Activated B cell treated with CpG ODN at 0.5 μM for 24 hours (primary cell): ENCODE measurements at regions of chr2 and their contacts with region 1.

Region 1: GRCh38 chr2:45833968-45834344 is 182.5 kb downstream of the PRKCE start:
- DNase-seq: peak; percentile 29
- ATAC-seq: peak; percentile 75
- H3K4me3 Mint-ChIP-seq: peak overlapping the region; percentile 39
- H3K27ac Mint-ChIP-seq: peak overlapping the region; percentile 94
- H3K4me1 Mint-ChIP-seq: peaks cover 71% of the 10 kb centered on the region
- H3K27me3 Mint-ChIP-seq: no peaks in the 10 kb centered on the region
- CTCF ChIP-seq: no peak

Region 2: DNA sequence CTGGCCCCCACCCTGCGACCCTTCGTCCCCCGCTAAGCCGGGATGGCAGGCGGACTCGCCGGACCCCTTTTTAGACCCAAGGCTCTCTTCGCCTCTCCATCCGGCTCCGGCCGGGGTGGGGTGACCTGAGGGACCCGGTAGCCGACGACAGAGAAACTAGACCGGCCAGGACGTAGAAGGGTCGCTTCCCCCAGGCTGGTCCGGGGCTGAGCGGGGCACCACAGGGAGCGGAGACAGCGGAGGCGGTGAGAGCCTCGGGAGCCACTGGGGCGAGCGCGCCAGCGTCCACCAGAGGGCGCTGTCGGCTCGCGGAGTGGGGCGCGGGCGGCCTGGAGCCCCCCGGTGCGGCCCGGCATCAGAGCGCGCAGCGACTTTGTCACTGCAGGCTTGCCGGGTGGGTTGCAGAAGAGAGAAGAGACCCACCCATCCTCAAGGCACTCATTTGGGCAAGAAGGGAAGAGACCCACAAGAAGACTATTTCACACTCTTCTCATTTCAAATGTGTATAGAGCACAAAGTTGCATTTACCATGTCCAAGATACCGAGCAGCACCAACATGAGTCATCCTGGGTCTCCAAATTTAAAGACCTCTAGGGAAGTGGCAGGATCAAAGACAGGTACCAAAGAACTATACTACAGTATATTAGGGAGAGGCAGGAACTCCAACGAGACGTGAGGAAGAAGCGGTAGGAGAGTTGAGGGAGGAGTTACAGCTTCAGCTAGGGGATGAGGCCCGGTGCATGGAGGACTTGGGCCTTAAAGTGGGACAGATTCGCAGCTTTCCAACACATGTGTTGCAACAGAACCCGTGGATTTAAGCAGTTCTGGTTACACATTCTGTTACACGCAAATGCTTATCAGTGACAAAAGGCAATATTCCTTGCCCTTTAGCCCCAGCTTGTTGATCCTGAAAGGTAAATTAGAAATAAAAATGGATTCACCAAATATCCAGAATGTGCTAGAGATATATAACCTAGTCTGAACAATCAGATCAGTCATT is 190.1 kb before region 1 on chr2:
- CTCF ChIA-PET with region 1: interaction called, 8 read pairs
- POLR2A ChIA-PET with region 1: interaction called, 3 read pairs
- intact Hi-C with region 1: loop called (anchors 1 kb)
- DNase-seq: peak; percentile 83
- ATAC-seq: peak; percentile 99
- H3K4me3 Mint-ChIP-seq: peak overlapping the region; percentile 77
- H3K27ac Mint-ChIP-seq: no peak overlapping the region
- H3K4me1 Mint-ChIP-seq: peaks cover 14% of the 10 kb centered on the region
- H3K27me3 Mint-ChIP-seq: peaks cover 5% of the 10 kb centered on the region
- CTCF ChIP-seq: peak; percentile 95

Region 3: DNA sequence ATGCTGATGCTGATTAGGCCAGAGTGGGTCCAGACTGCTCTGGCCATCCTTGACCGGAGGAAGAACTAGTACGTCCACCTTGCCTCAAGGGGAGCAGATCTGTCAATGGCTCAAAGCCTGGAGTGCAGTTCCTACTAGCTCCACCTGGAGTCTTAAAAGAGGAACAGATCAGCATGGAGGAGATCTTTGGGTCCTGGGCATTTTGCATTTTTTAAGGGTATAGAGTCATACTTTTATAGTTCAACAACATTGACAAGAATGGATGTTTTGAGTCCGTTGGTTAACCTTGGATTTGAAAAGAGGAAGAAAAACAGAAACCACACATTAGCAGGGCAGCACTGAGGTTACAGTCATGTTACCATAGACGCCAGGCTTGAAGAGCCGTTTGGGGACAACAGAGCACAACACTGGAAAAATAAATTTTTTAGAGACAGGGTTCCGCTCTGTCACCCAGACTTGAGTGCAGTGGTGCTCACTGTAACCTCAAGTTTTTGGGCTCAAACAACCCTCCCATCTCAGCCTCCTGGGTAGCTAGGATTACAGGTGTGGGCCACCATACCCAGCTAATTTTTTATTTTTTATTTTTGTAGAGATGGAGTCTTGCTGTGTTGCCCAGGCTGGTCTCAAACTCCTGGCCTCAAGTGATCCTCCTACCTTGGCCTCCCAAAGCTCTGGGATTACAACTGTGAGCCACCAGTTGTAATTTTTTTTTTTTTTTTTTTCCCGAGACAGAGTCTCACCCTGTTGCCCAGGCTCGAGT is 104.0 kb before region 1 on chr2:
- CTCF ChIA-PET with region 1: interaction called, 4 read pairs
- POLR2A ChIA-PET with region 1: interaction called, 10 read pairs
- intact Hi-C with region 1: loop called (anchors 2 kb)
- DNase-seq: peak; percentile 36
- ATAC-seq: peak; percentile 56
- H3K4me3 Mint-ChIP-seq: peak overlapping the region; percentile 59
- H3K27ac Mint-ChIP-seq: peak overlapping the region; percentile 98
- H3K4me1 Mint-ChIP-seq: peaks cover 91% of the 10 kb centered on the region
- H3K27me3 Mint-ChIP-seq: no peaks in the 10 kb centered on the region
- CTCF ChIP-seq: no peak

Region 4: GRCh38 chr2:45786030-45786835 is 47.7 kb before region 1 on chr2:
- CTCF ChIA-PET with region 1: no interaction called
- POLR2A ChIA-PET with region 1: interaction called, 3 read pairs
- intact Hi-C with region 1: loop called (anchors 5 kb)
- DNase-seq: no peak
- ATAC-seq: no peak
- H3K4me3 Mint-ChIP-seq: no peak overlapping the region
- H3K27ac Mint-ChIP-seq: peak overlapping the region; percentile 47
- H3K4me1 Mint-ChIP-seq: peaks cover 47% of the 10 kb centered on the region
- H3K27me3 Mint-ChIP-seq: no peaks in the 10 kb centered on the region
- CTCF ChIP-seq: no peak

Region 5: DNA sequence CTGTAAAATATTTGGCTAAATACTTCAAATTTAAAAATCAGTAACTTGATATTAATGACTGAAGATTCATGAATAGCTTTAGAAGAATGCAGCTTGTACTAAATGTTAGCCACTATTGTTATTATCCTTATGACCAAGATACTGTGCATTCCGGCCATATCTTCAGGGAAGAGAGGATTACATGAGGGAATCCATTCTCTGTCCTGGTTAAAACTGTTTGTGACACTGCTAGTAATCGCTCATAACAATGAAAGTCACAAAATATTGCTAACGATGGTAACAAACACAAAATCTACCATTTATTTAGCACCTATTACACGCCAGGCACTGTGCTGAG is 35.2 kb after region 1 on chr2:
- CTCF ChIA-PET with region 1: no interaction called
- POLR2A ChIA-PET with region 1: interaction called, 6 read pairs
- intact Hi-C with region 1: loop called (anchors 5 kb)
- DNase-seq: no peak
- ATAC-seq: no peak
- H3K4me3 Mint-ChIP-seq: no peak overlapping the region
- H3K27ac Mint-ChIP-seq: no peak overlapping the region
- H3K4me1 Mint-ChIP-seq: peaks cover 23% of the 10 kb centered on the region
- H3K27me3 Mint-ChIP-seq: no peaks in the 10 kb centered on the region
- CTCF ChIP-seq: no peak

Region 6: DNA sequence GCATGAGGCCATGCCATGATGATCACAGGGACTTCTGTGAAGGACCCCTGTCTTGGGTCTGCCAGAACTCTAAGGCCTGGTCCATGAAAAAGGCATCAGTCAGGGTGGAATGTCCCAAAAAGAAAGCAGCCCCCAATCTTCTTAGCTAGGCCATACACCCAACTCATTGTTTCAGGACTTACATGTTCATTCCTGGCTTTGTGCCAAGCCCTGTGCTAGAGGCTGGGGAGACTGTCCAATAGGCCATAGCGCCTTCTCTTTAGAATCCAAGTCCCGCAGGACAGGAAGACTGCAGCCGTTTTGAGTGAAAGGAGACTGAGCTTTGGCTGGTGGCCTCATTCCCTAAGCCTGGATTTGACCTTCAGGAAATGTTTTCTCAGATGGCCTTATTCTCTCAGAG is 64.9 kb after region 1 on chr2:
- CTCF ChIA-PET with region 1: no interaction called
- POLR2A ChIA-PET with region 1: no interaction called
- intact Hi-C with region 1: no loop called
- DNase-seq: no peak
- ATAC-seq: no peak
- H3K4me3 Mint-ChIP-seq: no peak overlapping the region
- H3K27ac Mint-ChIP-seq: no peak overlapping the region
- H3K4me1 Mint-ChIP-seq: peaks cover 48% of the 10 kb centered on the region
- H3K27me3 Mint-ChIP-seq: no peaks in the 10 kb centered on the region
- CTCF ChIP-seq: no peak

Region 7: GRCh38 chr2:45935791-45936622 is 102.1 kb after region 1 on chr2:
- CTCF ChIA-PET with region 1: interaction called, 14 read pairs
- POLR2A ChIA-PET with region 1: no interaction called
- intact Hi-C with region 1: loop called (anchors 5 kb)
- DNase-seq: peak; percentile 41
- ATAC-seq: peak; percentile 85
- H3K4me3 Mint-ChIP-seq: no peak overlapping the region
- H3K27ac Mint-ChIP-seq: no peak overlapping the region
- H3K4me1 Mint-ChIP-seq: peaks cover 6% of the 10 kb centered on the region
- H3K27me3 Mint-ChIP-seq: no peaks in the 10 kb centered on the region
- CTCF ChIP-seq: no peak

Region 8: DNA sequence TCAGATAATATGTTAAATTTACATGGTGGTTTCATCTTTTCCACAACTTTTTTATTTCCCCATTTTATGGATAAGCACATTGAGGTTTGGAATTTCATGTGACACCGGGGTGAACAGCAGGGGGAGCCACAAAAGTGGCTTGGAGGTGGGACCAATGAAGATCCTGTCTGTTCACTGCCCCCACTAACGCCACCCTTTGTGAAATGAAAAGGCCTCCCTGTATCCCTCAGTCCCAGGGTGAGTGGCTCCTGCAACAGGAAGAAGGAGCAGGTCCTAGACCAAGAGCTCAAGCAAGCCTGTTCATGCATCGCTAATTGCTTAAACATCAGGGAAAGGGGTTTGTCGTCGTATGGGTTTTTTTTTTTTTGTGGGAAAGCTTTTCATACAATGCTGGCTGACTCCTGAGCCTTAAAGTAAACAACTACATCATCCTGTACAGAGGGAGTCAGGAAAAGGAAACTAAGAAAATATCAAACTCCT is 195.4 kb after region 1 on chr2:
- CTCF ChIA-PET with region 1: no interaction called
- POLR2A ChIA-PET with region 1: no interaction called
- intact Hi-C with region 1: no loop called
- DNase-seq: no peak
- ATAC-seq: no peak
- H3K4me3 Mint-ChIP-seq: no peak overlapping the region
- H3K27ac Mint-ChIP-seq: no peak overlapping the region
- H3K4me1 Mint-ChIP-seq: no peaks in the 10 kb centered on the region
- H3K27me3 Mint-ChIP-seq: no peaks in the 10 kb centered on the region
- CTCF ChIP-seq: no peak

Region 9: GRCh38 chr2:46518861-46519260 is 684.9 kb after region 1 on chr2:
- CTCF ChIA-PET with region 1: no interaction called
- POLR2A ChIA-PET with region 1: no interaction called
- intact Hi-C with region 1: no loop called
- DNase-seq: no peak
- ATAC-seq: no peak
- H3K4me3 Mint-ChIP-seq: no peak overlapping the region
- H3K27ac Mint-ChIP-seq: no peak overlapping the region
- H3K4me1 Mint-ChIP-seq: peaks cover 17% of the 10 kb centered on the region
- H3K27me3 Mint-ChIP-seq: no peaks in the 10 kb centered on the region
- CTCF ChIP-seq: no peak